Panc1 (cell line): ENCODE measurements at regions of chr17 and their contacts with region 1.

Region 1: DNA sequence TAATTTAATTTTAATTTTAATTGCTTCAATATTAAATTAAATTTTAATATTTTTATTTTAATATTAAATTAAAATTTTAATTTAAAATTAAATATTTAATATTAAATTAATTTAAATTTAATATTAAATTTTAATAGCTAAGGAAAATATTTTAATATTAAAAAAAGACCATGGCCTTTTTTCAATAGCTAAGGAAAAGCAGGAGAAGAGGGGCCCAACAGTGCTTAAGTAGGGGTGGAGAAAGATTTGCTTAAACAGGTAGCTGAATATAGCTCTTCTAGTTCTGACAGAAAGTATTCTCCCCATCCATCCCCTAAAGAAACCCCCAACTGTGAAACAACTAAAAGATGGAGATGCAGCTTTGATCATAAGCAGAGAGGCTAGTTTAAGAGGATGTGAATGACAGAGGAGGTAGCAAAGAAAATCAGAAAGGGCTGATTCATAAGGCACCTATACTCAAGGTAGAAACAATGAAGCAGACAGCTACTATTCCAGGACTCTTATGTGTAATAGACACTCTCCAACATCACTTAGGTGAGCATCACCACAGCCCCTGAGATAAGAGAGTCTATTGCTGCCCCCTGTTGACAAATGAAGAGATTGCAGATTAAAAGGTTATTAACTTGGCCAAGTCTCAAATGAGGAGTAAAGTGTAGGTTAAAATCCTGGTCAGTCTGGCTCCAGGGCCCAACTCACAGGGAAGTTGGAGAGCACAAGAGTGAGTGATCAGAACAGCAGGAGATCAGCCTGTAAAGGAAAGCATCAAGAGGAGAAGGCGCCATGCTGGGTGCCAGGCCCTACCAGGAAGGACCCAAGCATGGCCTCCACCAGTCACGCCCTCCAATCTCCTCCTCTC is 7.8 kb upstream of the RNASEK start:
- DNase-seq: no peak
- ATAC-seq: peak; percentile 89
- H3K4me3 ChIP-seq: no peak overlapping the region
- H3K27ac ChIP-seq: no peak overlapping the region
- H3K4me1 ChIP-seq: no peaks in the 10 kb centered on the region
- H3K27me3 ChIP-seq: no peaks in the 10 kb centered on the region
- CTCF ChIP-seq: peak; percentile 77

Region 2: DNA sequence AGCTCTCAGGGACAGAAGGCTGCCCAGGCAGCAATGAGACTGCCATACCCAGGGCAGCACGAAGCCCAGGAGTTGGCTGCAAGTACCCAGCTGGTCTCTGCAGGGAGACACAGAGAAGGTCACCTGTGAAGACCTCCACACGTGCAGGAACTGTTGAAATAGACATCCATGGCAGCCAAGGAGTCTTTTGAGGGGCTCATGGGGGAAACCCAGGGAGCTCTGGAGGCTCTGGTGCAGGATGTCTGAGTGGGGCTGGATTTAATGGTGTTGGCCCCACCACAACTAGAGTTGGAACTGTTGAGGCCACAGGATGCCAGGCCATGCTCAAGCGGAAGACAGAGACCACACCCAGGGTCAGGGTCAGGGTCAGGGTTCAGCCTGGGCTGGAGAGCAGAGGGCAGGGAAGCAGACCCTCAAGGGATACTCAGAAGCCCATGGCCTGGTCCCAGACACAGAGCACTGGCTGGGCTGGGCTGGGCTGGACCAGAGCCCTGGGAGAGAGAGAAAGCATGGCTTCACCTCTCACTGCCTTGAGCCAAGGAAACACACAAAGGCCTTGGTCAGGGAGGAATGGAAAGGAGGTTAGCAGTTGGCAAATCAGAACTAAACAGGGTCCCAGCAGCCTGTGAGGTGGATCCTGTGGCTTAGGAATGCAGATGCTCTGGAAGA is 469.6 kb before region 1 on chr17:
- CTCF ChIA-PET with region 1: no interaction called
- POLR2A ChIA-PET with region 1: no interaction called
- in situ Hi-C with region 1: no loop called
- intact Hi-C with region 1: no loop called
- DNase-seq: no peak
- ATAC-seq: 0 out of 2 replicates have a peak, but pooled peaks have one; percentile 38
- H3K4me3 ChIP-seq: no peak overlapping the region
- H3K27ac ChIP-seq: no peak overlapping the region
- H3K4me1 ChIP-seq: no peaks in the 10 kb centered on the region
- H3K27me3 ChIP-seq: no peaks in the 10 kb centered on the region; the same call in 1 of the 2 replicates
- CTCF ChIP-seq: no peak

Region 3: DNA sequence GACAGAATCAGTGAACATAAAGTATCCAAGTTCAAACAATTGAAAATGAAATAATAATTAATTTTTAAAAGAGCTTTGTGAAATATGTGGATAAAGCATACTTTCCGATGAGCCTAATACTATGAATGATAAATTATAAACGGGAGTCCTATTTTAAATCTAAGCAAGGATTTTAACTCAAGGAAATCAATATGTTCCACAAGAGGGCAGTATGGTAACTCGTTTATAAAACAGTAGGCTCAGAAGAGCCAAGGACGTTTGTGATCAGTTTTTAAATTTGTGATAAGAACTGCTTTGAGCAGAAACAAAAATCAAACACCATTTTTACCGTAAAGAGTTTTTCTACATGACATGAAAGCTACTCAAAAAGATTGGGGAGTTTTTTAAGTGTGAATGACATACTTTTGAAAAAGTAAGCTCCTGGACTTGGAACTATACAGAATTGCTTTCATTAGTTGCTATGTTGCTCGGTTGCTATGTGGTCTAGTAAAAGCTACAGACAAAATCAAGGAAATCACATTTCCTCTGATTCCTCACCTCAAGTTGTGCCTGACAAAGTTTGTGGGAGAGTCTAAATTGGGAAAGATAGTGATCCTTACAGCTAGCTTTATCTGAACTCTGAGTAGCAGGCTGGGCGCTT is 161.3 kb before region 1 on chr17:
- CTCF ChIA-PET with region 1: interaction called, 10 read pairs
- POLR2A ChIA-PET with region 1: no interaction called
- in situ Hi-C with region 1: no loop called
- intact Hi-C with region 1: no loop called
- DNase-seq: peak; percentile 25
- ATAC-seq: no peak
- H3K4me3 ChIP-seq: no peak overlapping the region
- H3K27ac ChIP-seq: no peak overlapping the region
- H3K4me1 ChIP-seq: no peaks in the 10 kb centered on the region
- H3K27me3 ChIP-seq: peaks cover 9% of the 10 kb centered on the region
- CTCF ChIP-seq: peak; percentile 63; the same call in 1 of the 2 replicates

Region 4: DNA sequence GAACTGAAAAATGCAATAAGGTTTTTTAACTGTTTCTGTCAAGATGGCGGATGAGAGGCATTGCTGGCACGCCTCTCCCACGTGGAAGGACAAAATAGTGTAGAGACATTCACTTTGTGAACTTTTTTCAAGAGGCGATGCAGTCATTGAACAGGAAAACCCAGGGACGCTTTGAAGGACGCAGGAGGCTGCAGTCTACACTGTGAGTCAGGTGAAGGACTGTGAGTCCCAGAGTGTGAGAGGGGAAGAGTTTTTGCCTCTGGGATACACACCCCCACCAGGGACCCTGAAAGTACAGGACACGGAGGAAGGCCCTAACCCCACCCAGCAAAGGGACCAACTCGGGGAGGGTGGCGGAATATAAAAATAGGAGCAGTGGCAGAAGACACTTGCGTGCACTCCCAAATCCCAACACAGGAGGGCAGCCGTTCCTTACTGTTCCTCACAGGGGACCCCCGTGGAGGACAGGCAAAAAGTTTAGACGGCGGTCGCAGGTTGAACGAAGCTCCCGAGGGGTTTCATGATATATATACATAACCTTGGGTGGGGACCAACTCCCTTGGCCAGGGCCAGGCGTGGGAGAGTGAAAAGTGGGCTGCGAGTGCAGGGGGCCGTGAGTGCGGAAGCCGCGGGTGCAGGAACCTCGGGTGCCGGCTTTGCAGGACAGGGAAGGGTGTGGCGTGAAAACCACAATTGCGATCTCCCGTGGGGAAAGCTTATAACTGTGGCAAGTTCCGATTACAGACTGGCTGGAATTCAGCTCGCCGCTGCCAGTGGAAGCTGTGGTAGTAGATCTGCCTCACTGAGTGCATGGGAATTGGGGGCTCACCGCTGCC is 90.8 kb before region 1 on chr17:
- CTCF ChIA-PET with region 1: interaction called, 15 read pairs
- POLR2A ChIA-PET with region 1: no interaction called
- in situ Hi-C with region 1: no loop called
- intact Hi-C with region 1: loop called (anchors 2 kb)
- DNase-seq: peak; percentile 35
- ATAC-seq: peak; percentile 88
- H3K4me3 ChIP-seq: peak overlapping the region in 1 of 2 experiments; percentile 9; a peak in 1 of 4 replicates
- H3K27ac ChIP-seq: no peak overlapping the region
- H3K4me1 ChIP-seq: no peaks in the 10 kb centered on the region
- H3K27me3 ChIP-seq: no peaks in the 10 kb centered on the region
- CTCF ChIP-seq: peak; percentile 90